ENCODE measurements at regions of chr4 and their contacts with region 1.

Region 1: DNA sequence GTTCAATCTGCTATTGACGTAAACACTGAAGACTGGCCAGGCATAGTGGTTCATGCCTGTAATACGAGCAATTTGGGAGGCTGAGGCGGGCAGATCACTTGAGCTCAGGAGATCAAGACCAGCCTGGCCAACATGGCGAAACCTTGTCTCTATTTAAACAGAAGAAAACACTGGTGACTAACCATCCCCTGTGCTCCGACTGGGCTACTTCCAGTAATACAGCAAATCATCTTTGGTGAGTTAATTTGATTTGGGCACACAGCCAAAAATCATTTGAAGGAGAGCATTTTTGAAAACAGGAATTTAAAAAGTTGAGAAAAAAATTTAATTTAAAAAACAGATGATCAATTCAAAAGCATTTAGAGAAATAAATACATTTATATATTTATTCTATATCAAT is 52.0 kb downstream of the SEC24D start:
- DNase-seq: no peak
- ATAC-seq: no peak
- H3K4me3 ChIP-seq: no peak overlapping the region
- H3K27ac ChIP-seq: no peak overlapping the region
- H3K4me1 ChIP-seq: no peaks in the 10 kb centered on the region
- H3K27me3 ChIP-seq: no peaks in the 10 kb centered on the region
- CTCF ChIP-seq: no peak
- EP300 ChIP-seq: no peak
- POLR2A ChIP-seq: no peak
- RAD21 ChIP-seq: no peak

Region 2: GRCh38 chr4:118801899-118802575 is 18.1 kb after region 1 on chr4:
- CTCF ChIA-PET with region 1: no interaction called
- POLR2A ChIA-PET with region 1: no interaction called
- in situ Hi-C with region 1: no loop called
- intact Hi-C with region 1: loop called (anchors 2 kb)
- DNase-seq: no peak
- ATAC-seq: no peak
- H3K4me3 ChIP-seq: no peak overlapping the region
- H3K27ac ChIP-seq: no peak overlapping the region
- H3K4me1 ChIP-seq: no peaks in the 10 kb centered on the region
- H3K27me3 ChIP-seq: no peaks in the 10 kb centered on the region
- CTCF ChIP-seq: no peak
- EP300 ChIP-seq: no peak
- POLR2A ChIP-seq: no peak
- RAD21 ChIP-seq: no peak

Region 3: GRCh38 chr4:118865091-118865708 is 81.3 kb after region 1 on chr4:
- CTCF ChIA-PET with region 1: no interaction called
- POLR2A ChIA-PET with region 1: no interaction called
- in situ Hi-C with region 1: no loop called
- intact Hi-C with region 1: no loop called
- DNase-seq: peak; percentile 56
- ATAC-seq: peak; percentile 100
- H3K4me3 ChIP-seq: no peak overlapping the region
- H3K27ac ChIP-seq: no peak overlapping the region
- H3K4me1 ChIP-seq: no peaks in the 10 kb centered on the region
- H3K27me3 ChIP-seq: peaks cover 0 to 4% of the 10 kb centered on the region in 2 experiments; a peak in 1 of 5 replicates
- CTCF ChIP-seq: peak; percentile 84
- EP300 ChIP-seq: no peak
- POLR2A ChIP-seq: no peak
- RAD21 ChIP-seq: 0 out of 2 replicates have a peak, but pooled peaks have one; percentile 27

Measured in HepG2 (cell line).